ENCODE measurements at regions of chr7 and their contacts with region 1.

Region 1: DNA sequence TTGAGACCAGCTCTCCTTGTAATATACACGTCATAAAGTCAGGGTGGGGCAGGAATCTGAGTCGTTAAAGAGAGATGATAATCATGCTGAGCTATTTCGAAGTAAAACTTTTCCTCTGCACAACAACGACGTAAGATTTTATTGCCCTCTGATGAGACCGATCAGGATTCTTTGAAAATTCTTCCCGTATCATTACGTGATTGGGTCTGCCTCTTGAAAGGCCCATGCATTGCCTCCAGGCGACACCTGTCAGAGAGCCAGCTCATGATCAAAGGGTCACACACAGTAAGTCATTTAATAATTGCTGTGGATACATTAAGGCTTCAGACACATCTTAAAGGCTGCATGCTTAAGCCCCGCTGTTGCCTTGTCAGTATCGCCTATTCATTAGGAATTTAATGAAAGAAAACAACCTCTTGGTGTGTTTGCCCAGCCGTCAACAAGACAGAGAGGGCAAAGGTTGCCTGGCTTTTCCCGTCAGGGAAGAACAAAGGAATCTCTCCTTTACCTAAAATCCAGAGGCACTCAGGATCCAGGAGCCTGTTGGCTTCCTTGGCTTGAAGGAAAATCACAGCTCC is 189.0 kb upstream of the SH2B2 start:
- DNase-seq: peak; percentile 93 to 97
- H3K4me3 ChIP-seq: no peak overlapping the region
- H3K4me3 Mint-ChIP-seq: peak overlapping the region; percentile 71
- H3K27ac Mint-ChIP-seq: peak overlapping the region; percentile 99
- H3K4me1 ChIP-seq: peaks cover 75% of the 10 kb centered on the region
- H3K4me1 Mint-ChIP-seq: peaks cover 29% of the 10 kb centered on the region
- H3K27me3 ChIP-seq: no peaks in the 10 kb centered on the region
- H3K27me3 Mint-ChIP-seq: no peaks in the 10 kb centered on the region
- CTCF ChIP-seq: no peak

Region 2: DNA sequence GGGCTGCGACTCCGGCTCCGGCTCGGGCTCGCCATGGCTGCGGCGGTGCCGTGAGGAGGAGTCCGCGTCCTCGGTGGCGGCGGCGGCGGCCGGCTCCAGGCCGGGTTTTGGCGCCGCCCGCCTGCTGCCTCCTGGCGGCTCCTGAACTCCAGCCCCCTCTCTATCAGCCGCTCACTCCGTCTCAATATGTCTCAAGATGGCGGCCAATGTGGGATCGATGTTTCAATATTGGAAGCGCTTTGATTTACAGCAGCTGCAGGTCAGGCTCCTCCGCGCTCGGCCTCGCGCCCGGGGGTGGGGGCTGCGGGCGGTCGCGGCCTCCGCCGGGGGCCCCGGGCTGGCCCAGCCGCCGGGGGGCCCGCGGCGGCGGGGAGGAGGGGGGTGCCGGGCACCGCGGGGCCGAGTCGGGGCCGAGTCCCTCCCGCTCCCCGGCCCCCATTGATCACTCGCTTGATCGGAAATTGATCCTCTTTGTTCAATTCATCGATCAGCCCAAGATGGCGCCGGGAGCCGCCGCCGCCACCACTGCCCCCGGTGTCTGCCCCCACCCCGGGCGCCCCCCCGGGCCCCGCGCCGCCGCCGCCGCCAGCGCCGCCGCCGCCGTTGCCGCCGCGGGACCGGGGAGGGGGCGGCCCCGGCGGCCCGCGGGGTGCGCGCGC is 281.7 kb before region 1 on chr7:
- CTCF ChIA-PET with region 1: no interaction called
- POLR2A ChIA-PET with region 1: interaction called, 4 read pairs
- intact Hi-C with region 1: loop called (anchors 5 kb)
- DNase-seq: peak; percentile 85 to 86
- H3K4me3 ChIP-seq: peak overlapping the region; percentile 99
- H3K4me3 Mint-ChIP-seq: peak overlapping the region; percentile 96
- H3K27ac Mint-ChIP-seq: no peak overlapping the region
- H3K4me1 ChIP-seq: peaks cover 32% of the 10 kb centered on the region
- H3K4me1 Mint-ChIP-seq: peaks cover 25% of the 10 kb centered on the region
- H3K27me3 ChIP-seq: no peaks in the 10 kb centered on the region
- H3K27me3 Mint-ChIP-seq: no peaks in the 10 kb centered on the region
- CTCF ChIP-seq: peak in 1 of 2 experiments; percentile 23

Region 3: GRCh38 chr7:101924171-101924570 is 173.5 kb before region 1 on chr7:
- CTCF ChIA-PET with region 1: no interaction called
- POLR2A ChIA-PET with region 1: no interaction called
- intact Hi-C with region 1: loop called (anchors 5 kb)
- DNase-seq: no peak
- H3K4me3 ChIP-seq: no peak overlapping the region
- H3K4me3 Mint-ChIP-seq: no peak overlapping the region
- H3K27ac Mint-ChIP-seq: peak overlapping the region; percentile 96
- H3K4me1 ChIP-seq: peaks cover 23% of the 10 kb centered on the region
- H3K4me1 Mint-ChIP-seq: peaks cover 31% of the 10 kb centered on the region
- H3K27me3 ChIP-seq: no peaks in the 10 kb centered on the region
- H3K27me3 Mint-ChIP-seq: no peaks in the 10 kb centered on the region
- CTCF ChIP-seq: no peak

Region 4: DNA sequence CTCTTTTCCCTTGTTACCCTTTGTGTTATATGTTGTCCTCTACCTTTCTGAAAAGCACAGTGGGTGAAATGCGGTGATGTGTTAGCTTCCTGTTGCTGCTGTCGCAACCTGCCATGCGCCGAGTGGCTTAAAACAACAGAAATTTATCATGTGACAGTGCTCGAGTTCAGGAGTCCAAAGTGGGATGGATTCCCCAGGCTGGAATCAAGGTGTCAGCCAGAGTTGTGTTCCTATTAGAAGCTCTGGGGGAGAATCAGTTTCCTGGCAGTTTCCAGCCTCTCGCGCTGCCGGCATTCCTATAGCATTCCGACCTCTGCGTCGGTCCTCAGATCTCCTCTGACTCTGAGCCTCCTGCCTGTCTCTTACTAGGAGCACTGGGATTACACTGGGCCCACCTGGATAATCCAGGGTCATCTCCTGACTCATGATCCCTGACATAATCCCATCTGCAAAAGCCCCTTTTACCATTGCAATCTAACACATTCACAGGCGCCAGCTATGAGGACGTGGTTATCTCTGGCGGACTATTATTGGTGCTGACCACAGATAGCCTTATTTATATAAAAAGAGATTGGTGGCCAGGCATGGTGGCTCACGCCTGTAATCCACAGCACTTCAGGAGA is 72.8 kb before region 1 on chr7:
- CTCF ChIA-PET with region 1: interaction called, 5 read pairs
- POLR2A ChIA-PET with region 1: interaction called, 10 read pairs
- intact Hi-C with region 1: loop called (anchors 1 kb)
- DNase-seq: peak; percentile 85 to 90
- H3K4me3 ChIP-seq: no peak overlapping the region
- H3K4me3 Mint-ChIP-seq: peak overlapping the region; percentile 54
- H3K27ac Mint-ChIP-seq: peak overlapping the region; percentile 78
- H3K4me1 ChIP-seq: peaks cover 51% of the 10 kb centered on the region
- H3K4me1 Mint-ChIP-seq: peaks cover 42% of the 10 kb centered on the region
- H3K27me3 ChIP-seq: no peaks in the 10 kb centered on the region
- H3K27me3 Mint-ChIP-seq: no peaks in the 10 kb centered on the region
- CTCF ChIP-seq: no peak

Region 5: GRCh38 chr7:102125127-102125561 is 27.5 kb after region 1 on chr7:
- CTCF ChIA-PET with region 1: interaction called, 3 read pairs
- POLR2A ChIA-PET with region 1: interaction called, 10 read pairs
- intact Hi-C with region 1: loop called (anchors 1 kb)
- DNase-seq: peak; percentile 24 to 47
- H3K4me3 ChIP-seq: no peak overlapping the region
- H3K4me3 Mint-ChIP-seq: no peak overlapping the region
- H3K27ac Mint-ChIP-seq: no peak overlapping the region
- H3K4me1 ChIP-seq: peaks cover 21% of the 10 kb centered on the region
- H3K4me1 Mint-ChIP-seq: peaks cover 26% of the 10 kb centered on the region
- H3K27me3 ChIP-seq: no peaks in the 10 kb centered on the region
- H3K27me3 Mint-ChIP-seq: no peaks in the 10 kb centered on the region
- CTCF ChIP-seq: no peak

Measured in Caco-2 (cell line).